OCI-LY7 (cell line): ENCODE measurements at regions of chr13 and their contacts with region 1.

Region 1: GRCh38 chr13:50676602-50677001 is 166.9 kb downstream of the DLEU7 start:
- DNase-seq: peak; percentile 9
- H3K4me3 ChIP-seq: no peak overlapping the region
- H3K27ac ChIP-seq: no peak overlapping the region
- H3K4me1 ChIP-seq: no peaks in the 10 kb centered on the region
- CTCF ChIP-seq: no peak

Region 2: GRCh38 chr13:50691681-50692263 is 15.2 kb after region 1 on chr13:
- CTCF ChIA-PET with region 1: no interaction called
- POLR2A ChIA-PET with region 1: interaction called, 11 read pairs
- intact Hi-C with region 1: no loop called
- DNase-seq: no peak
- H3K4me3 ChIP-seq: no peak overlapping the region
- H3K27ac ChIP-seq: no peak overlapping the region
- H3K4me1 ChIP-seq: no peaks in the 10 kb centered on the region
- CTCF ChIP-seq: no peak

Region 3: GRCh38 chr13:50731400-50731799 is 54.8 kb after region 1 on chr13:
- CTCF ChIA-PET with region 1: no interaction called
- POLR2A ChIA-PET with region 1: no interaction called
- intact Hi-C with region 1: no loop called
- DNase-seq: no peak
- H3K4me3 ChIP-seq: no peak overlapping the region
- H3K27ac ChIP-seq: no peak overlapping the region
- H3K4me1 ChIP-seq: peaks cover 12% of the 10 kb centered on the region
- CTCF ChIP-seq: no peak